SK-N-SH (cell line): ENCODE measurements at regions of chr11 and their contacts with region 1.

Region 1: DNA sequence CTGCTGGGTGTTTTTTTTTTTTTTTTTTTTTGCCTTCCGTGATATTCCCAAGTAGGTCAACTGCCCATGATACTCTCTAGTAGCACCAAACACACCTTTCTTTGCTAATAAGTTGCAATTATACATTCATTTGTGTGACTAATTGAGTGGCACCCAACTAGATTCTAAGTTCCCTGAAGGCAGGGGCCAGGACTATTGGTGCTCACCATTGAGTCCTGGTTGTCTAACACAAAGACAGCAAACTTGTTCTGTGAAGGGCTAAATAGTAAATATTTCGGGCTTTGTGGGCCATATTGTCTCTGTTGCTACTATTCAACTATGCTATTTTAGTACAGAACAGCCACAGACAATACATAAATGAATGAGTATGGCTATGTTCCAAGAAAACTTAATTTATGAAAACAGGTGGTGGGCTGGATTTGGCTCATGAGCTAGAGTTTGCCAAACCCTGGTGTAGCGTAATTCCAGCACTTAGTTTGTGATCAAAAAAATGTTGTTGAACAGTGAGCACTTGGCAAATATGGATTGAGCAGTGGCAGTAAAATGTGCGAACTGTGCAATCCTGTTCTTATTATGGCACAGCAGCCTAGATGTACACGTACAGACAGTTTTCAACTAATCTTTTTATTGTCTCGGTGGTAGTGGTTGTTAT is 11.3 kb downstream of the ENDOD1 start:
- DNase-seq: no peak
- H3K4me3 ChIP-seq: no peak overlapping the region
- H3K27ac ChIP-seq: no peak overlapping the region
- H3K4me1 ChIP-seq: peaks cover 0 to 9% of the 10 kb centered on the region in 2 experiments; a peak in 2 of 4 replicates
- H3K27me3 ChIP-seq: no peaks in the 10 kb centered on the region
- CTCF ChIP-seq: no peak
- EP300 ChIP-seq: no peak
- RAD21 ChIP-seq: no peak

Region 2: DNA sequence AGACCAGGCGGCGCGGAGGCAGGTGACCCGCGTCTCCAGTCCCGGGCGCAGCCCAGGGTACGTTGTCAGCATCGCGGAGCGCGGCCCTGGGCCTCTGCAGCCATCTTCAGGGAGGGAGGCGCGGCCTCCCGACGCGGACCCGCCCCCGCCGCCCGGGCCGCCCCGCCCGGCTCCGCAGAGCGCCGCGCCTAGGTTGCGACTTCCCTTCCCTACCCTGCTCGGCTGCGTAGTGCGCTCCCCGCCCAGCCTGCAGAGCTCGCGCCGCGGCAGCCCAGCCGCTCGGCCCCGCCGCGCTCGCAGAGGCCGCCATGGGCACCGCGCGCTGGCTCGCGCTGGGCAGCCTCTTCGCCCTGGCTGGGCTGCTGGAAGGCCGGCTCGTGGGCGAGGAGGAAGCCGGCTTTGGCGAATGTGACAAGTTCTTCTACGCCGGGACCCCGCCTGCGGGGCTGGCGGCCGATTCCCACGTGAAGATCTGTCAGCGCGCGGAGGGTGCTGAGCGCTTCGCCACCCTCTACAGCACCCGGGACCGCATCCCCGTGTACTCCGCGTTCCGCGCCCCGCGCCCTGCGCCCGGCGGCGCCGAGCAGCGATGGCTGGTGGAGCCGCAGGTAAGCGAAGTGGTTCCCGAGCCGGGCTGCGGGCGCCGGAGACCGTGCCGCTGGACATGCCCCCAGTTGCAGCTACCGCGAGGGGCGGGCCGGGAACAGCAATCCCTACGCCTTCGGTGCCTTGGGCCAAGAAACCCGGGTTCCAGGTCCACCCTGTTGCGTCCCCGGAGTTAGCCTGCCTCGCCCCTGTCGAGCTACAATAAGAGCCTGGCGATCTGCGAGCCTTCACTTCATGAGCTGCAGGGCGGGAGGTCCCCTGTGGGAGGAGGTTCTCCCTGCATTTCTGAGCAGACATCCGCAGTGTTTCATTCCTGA is 11.1 kb before region 1 on chr11 and contains the start of gene ENDOD1:
- CTCF ChIA-PET with region 1: interaction called, 24 read pairs
- POLR2A ChIA-PET with region 1: interaction called, 4 read pairs
- DNase-seq: peak; percentile 95
- H3K4me3 ChIP-seq: peak within 1 kb of the TSS; percentile 86 to 90
- H3K27ac ChIP-seq: peak within 1 kb of the TSS; percentile 57 to 72; a peak in 3 of 4 replicates
- H3K4me1 ChIP-seq: peaks cover 13 to 22% of the 10 kb centered on the region in 2 experiments; a peak in 2 of 4 replicates
- H3K27me3 ChIP-seq: no peaks in the 10 kb centered on the region
- CTCF ChIP-seq: no peak; the same call in 1 of the 2 replicates
- EP300 ChIP-seq: no peak
- RAD21 ChIP-seq: no peak
- polyA plus RNA-seq, gene ENDOD1: 15.0 and 18.4 TPM in 2 replicates

Region 3: GRCh38 chr11:95241681-95242081 is 140.7 kb after region 1 on chr11:
- CTCF ChIA-PET with region 1: no interaction called
- POLR2A ChIA-PET with region 1: no interaction called
- DNase-seq: no peak
- H3K4me3 ChIP-seq: no peak overlapping the region
- H3K27ac ChIP-seq: no peak overlapping the region
- H3K4me1 ChIP-seq: no peaks in the 10 kb centered on the region; a peak in 1 of 4 replicates
- H3K27me3 ChIP-seq: no peaks in the 10 kb centered on the region
- CTCF ChIP-seq: no peak
- EP300 ChIP-seq: no peak
- RAD21 ChIP-seq: no peak